Cardiac septum (tissue), 1 donor: ENCODE measurements at regions of chr11 and their contacts with region 1.

Region 1: DNA sequence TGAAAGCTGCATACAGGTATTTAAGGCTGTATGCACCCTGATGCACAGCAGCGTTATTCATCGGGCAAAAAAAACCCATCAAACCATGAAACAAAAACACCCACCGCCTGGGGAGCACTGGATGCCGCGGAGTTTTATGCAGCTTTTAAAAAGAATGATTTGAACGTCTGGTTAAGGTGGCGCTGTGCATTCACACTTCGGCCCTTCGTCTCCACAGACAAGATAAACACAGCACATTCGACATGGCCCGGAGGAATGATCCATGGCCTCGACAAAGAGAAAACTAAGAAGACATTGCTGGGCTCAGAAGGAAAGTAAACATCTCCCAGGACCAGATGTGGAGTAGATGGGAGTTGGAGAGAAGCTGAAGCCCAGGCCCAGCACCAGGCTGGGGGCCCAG is 40.8 kb upstream of the GAL start:
- DNase-seq: no peak

Region 2: DNA sequence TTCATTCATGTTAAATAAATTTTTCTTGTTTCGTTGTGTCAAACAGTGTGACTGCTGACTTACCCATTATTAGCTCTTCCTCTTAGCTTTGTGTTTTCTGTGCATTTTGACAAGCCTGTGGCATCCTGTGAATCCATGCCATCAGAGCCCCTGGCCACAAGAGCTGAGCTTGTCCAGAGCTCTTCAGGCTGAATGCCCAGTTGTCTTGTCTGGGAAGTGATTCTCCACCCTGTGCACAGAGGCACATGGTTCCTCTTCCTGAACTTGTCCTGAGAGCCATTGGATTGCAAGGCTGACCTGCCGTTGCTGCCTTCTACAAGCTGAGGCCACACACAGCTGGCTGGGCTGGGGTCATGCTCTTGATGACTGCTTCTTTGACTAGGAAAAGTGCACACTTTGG is 118.9 kb before region 1 on chr11:
- intact Hi-C with region 1: no loop called
- DNase-seq: no peak

Region 3: DNA sequence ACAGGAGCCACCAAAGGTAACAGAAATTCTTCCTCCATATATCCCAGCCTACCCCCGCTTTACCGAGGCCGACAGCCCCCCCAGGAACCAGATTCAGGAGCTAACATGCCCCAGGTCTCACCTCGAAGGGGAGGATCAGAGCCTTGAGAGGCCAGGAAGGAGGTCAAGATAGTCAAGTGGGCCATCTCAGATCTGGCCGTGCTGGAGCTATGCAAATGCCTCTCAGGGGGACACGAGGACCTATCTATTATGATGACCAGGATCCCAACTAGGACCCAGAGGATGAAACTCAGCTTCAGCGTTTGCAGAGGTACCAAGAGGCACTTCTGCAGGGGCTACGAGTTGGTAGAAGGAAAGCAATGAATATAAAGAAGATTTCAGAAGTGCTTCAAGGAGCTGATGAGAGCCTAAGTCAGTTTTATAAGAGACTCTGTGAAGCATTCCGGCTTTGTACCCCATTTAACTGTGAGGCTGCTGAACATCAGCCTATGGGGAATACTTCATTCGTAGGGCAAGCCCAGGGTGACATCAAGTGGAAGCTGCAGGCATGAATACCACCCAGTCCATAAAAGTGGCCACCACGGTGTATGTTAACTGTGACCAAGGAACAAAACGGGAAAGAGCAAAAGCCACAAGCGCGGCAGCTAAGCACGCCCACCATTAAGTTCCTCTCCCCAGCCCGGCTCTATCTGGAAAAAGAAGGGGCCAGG is 225.8 kb after region 1 on chr11:
- intact Hi-C with region 1: loop called (anchors 10 kb)
- DNase-seq: no peak